ENCODE measurements at regions of chr12 and their contacts with region 1.

Region 1: GRCh38 chr12:24045816-24046257 is 96.4 kb upstream of the SOX5 start:
- DNase-seq: no peak
- ATAC-seq: no peak
- H3K4me3 ChIP-seq: no peak overlapping the region
- H3K4me3 Mint-ChIP-seq: no peak overlapping the region
- H3K27ac ChIP-seq: no peak overlapping the region
- H3K27ac Mint-ChIP-seq: no peak overlapping the region
- H3K4me1 ChIP-seq: no peaks in the 10 kb centered on the region
- H3K4me1 Mint-ChIP-seq: no peaks in the 10 kb centered on the region
- H3K27me3 ChIP-seq: no peaks in the 10 kb centered on the region
- H3K27me3 Mint-ChIP-seq: no peaks in the 10 kb centered on the region

Region 2: GRCh38 chr12:24066865-24067264 is 21.0 kb after region 1 on chr12:
- CTCF ChIA-PET with region 1: no interaction called
- POLR2A ChIA-PET with region 1: interaction called in 1 of 2 experiments, 11 read pairs
- DNase-seq: no peak
- ATAC-seq: no peak
- H3K4me3 ChIP-seq: no peak overlapping the region
- H3K4me3 Mint-ChIP-seq: no peak overlapping the region
- H3K27ac ChIP-seq: no peak overlapping the region
- H3K27ac Mint-ChIP-seq: no peak overlapping the region
- H3K4me1 ChIP-seq: no peaks in the 10 kb centered on the region
- H3K4me1 Mint-ChIP-seq: no peaks in the 10 kb centered on the region
- H3K27me3 ChIP-seq: no peaks in the 10 kb centered on the region
- H3K27me3 Mint-ChIP-seq: no peaks in the 10 kb centered on the region